ENCODE measurements at regions of chr7 and their contacts with region 1.

Region 1: DNA sequence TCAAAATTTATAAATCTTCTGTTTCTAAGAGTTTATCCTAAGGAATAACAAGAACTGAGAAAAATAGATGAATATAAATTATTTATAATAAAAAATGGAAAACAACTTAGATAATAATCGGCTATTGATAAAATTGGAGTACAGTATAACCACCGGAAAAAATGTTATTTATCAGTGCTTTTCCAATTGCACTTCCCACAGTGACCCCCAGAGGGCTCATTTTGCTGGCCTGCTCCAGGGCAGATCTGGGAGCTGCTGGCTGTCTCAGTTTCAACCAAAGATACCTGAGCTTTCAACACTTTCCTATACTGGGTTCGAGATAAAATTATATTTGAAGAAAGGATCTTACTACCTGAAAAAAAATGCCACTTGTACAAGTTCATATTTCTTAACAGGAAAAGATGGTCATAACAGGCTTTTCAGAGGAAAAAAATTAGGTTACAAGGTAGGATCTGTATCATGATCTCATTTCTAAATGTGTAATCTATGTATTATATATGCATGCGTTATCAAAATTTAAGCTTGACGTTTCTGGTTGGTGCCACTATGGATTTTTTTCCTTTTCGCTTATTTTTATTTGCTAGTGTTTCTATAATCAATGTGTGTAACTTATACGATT is 165.7 kb downstream of the NPSR1 start:
- DNase-seq: no peak
- H3K4me3 ChIP-seq: no peak overlapping the region
- H3K27ac ChIP-seq: no peak overlapping the region
- H3K4me1 ChIP-seq: no peaks in the 10 kb centered on the region
- H3K27me3 ChIP-seq: no peaks in the 10 kb centered on the region
- CTCF ChIP-seq: peak in 2 of 3 experiments; percentile 67 to 77

Region 2: DNA sequence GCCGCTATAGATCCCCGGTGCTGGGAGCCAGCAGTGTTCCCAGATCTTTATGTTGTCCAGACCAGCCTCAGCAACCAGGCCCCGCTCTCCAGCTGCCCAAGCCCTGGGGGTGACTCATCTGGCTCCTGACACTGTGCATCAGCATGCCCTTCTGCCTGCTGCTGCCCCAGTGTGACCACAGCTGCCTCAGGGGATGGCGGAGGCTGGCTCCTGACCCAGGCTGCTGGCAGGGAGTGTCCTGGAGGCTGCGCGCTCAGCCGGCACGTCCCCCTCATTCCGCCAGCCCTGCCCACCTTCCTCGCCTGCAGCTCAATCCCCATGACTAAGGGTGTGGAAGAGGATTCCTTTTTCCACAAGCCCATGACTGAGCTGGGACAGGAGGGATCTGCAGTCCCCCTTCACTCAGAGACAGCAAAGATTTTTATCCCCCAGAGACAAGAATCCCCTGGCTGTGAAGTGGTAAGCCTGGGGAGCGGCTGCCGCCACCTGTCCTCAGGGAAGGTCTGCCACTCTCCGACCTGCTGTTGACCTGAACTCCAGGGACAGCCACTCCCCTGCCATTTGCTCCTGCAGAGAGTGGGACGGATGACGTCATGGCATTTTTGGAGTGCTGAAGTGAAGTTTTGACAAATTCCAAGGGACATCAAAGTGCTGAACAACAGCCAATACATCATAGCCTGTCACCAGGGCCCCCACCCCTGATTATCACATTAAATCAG is 1101.2 kb before region 1 on chr7:
- intact Hi-C with region 1: no loop called
- DNase-seq: no peak
- H3K4me3 ChIP-seq: no peak overlapping the region
- H3K27ac ChIP-seq: no peak overlapping the region
- H3K4me1 ChIP-seq: peaks cover 10 to 14% of the 10 kb centered on the region in 2 donors
- H3K27me3 ChIP-seq: no peaks in the 10 kb centered on the region
- CTCF ChIP-seq: no peak

Region 3: GRCh38 chr7:35537067-35538023 is 713.6 kb after region 1 on chr7:
- intact Hi-C with region 1: loop called (anchors 5 kb)
- DNase-seq: peak in 1 of 2 donors; percentile 81
- H3K4me3 ChIP-seq: peak overlapping the region; percentile 40 to 60
- H3K27ac ChIP-seq: no peak overlapping the region
- H3K4me1 ChIP-seq: no peaks in the 10 kb centered on the region
- H3K27me3 ChIP-seq: no peaks in the 10 kb centered on the region
- CTCF ChIP-seq: peak; percentile 66 to 96 (median 90)

Region 4: DNA sequence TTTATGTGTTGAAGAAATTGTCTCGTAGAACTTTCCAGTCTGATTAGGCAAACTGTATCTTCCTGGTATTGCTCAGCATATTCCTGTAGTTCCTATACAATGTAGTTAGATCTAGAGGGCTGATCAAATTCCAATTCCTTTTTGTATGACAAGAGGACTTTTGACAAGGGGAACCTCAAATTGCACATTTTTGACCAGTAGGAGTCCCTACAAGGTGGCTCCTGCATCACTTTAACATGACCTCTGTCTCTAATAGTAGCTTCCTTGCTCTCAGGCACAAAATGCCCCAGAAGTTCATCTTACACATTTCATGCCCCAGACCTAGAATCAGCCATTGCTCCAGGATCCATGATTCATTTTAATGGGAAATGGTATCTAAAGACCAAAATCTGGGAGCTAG is 852.5 kb after region 1 on chr7:
- intact Hi-C with region 1: no loop called
- DNase-seq: no peak
- H3K4me3 ChIP-seq: no peak overlapping the region
- H3K27ac ChIP-seq: no peak overlapping the region
- H3K4me1 ChIP-seq: peaks cover 0 to 11% of the 10 kb centered on the region in 2 donors
- H3K27me3 ChIP-seq: no peaks in the 10 kb centered on the region
- CTCF ChIP-seq: no peak

Measured in ascending aorta (tissue), 2 donors.